Right ventricle myocardium superior (tissue), 1 donor: ENCODE measurements at regions of chr1 and their contacts with region 1.

Region 1: DNA sequence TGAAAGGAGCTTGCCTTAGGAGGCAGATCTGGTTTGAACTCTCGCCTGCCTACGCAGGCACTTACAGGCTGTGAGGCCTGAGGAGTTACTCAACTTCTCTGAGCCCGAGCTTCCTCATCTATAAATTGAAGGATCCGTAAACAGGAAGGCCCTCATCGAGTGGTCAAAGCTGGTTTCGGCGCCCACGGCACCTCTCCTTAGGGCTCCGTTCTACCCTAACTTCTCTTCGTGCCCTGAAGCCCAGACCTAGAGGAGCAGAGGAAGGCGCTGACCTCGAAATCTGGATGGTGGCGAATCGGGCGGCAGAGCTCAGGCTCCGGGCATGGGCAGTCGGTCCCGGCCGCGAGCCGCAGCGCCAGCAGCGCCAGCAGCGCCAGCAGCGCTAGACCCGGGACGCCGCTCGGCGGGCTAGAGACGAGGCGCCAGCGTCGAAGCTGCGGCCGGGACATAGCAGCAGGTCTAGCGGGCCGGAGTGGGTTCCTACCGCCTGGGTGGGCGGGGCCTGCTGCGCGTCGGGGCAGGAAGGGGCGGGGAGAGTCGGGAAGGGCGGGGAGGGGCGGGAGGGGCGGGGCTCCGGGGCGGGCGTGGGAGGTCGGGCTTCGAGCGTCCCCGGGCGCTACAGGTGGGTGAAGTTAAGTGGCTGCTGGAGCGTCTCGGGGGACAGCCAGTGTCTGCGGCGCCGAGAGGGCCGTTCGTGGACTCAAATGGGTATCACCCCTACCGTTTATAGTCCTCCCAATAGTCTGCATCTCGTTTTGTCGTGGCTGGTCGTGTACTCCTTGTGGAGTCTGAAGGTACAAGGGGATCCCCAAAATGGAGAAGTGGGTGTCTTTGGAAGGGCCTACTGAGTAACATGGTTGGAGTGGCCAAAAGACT is at the start of gene CTBS:
- DNase-seq: peak; percentile 93
- ATAC-seq: peak; percentile 99
- total RNA-seq, gene CTBS: 5.0 TPM

Region 2: DNA sequence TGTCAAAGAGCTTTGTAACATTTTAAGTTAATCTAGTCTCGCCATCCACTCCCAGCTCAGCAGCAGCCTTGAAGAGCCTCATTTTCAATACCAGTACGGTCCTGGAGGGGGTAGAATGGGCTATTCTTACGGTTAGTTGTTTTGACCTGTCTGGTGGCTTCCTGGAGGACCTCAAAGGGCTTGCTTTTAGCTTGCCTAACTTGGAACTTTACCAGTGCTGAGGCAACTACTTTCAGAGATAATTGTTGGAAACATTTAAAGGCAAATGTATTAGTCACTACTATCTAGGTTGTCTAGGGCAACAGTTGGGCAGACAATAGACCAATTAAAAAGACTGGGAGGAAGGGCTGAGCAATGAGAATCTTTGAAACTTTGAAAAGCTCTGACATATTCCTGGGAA is 631.3 kb before region 1 on chr1:
- intact Hi-C with region 1: no loop called
- DNase-seq: no peak
- ATAC-seq: no peak

Region 3: GRCh38 chr1:84506002-84506728 is 68.0 kb before region 1 on chr1 and contains the starts of genes GNG5 and SPATA1:
- intact Hi-C with region 1: loop called (anchors 5 kb)
- DNase-seq: peak; percentile 100
- ATAC-seq: peak; percentile 96
- total RNA-seq, gene GNG5: 174 TPM
- total RNA-seq, gene SPATA1: 0.81 TPM